Heart left ventricle (tissue), 16 donors: ENCODE measurements at regions of chrX and their contacts with region 1.

Region 1: DNA sequence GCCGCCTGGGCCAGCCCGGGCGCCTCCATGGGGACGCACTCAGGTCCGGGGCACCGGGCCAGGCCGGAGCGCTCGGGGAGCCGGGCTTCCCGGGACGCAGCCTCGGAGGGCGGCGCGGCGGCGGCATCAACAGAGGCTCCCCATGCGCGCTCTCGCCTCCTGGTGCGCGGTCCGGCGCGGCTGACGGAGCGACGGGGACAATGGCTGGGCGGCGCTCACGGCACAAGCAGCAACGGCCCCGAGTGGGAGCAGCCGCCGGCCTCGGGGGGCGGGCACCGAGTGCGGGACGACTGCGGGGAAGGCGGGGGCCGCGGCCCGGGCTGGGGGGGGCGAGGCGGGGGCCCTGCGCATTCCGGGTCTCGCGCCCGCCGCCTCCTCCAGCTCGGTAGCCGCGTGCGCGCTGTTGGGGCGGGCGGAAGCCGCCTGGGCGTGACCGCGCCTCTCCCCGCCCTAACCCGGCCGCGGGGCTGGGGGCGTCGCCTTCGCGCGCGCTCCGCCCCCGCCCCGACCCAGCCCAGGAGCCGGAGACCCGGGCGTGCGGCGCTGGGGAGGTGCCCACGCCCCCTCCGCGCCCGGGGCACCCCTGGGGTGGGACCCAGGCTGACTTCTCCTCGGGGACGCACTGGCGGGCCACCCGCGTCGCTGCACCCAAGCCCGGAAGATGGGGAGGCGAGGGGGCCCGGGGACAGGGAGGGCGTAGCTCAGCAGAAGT is at the start of gene PRKX:
- DNase-seq: peak; percentile 46 to 74 (median 67)
- ATAC-seq: peak; percentile 44 to 91 (median 83)
- H3K4me3 ChIP-seq: peak within 1 kb of the TSS; percentile 52 to 89 (median 68)
- H3K27ac ChIP-seq: peak within 1 kb of the TSS; percentile 41 to 85 (median 80)
- H3K4me1 ChIP-seq: peaks cover 0 to 18% (median 0%) of the 10 kb centered on the region in 12 donors
- H3K27me3 ChIP-seq: peaks cover 0 to 25% (median 0%) of the 10 kb centered on the region in 9 donors
- CTCF ChIP-seq: no peak
- POLR2A ChIP-seq: no peak
- total RNA-seq, gene PRKX: 2.8 to 19.1 (median 4.2) TPM

Region 2: DNA sequence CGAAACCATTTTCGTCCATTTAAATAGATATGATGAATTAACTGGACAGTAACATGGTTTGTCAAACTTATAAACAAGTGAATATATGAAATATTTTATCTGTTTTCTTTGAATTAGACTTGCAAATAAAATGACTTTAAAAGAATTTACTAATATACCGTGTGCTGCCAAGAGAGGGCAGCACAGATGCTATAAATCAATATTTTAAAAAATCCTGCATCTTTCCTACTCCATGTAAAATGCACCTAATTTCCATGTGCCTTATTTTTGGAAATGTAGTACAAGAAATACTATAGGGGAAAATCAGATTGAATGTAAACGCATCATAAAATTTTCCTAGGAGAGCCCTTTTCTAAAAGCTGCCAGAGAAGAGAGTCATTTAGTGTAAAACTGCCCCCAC is 62.1 kb before region 1 on chrX:
- intact Hi-C with region 1: loop called in 3 of 10 experiments (anchors 5 to 10 kb)
- DNase-seq: no peak
- ATAC-seq: no peak
- H3K4me3 ChIP-seq: no peak overlapping the region
- H3K27ac ChIP-seq: no peak overlapping the region
- H3K4me1 ChIP-seq: no peaks in the 10 kb centered on the region
- H3K27me3 ChIP-seq: no peaks in the 10 kb centered on the region
- CTCF ChIP-seq: peak; percentile 25 to 60 (median 46)
- POLR2A ChIP-seq: no peak

Region 3: GRCh38 chrX:3659761-3660160 is 53.6 kb before region 1 on chrX:
- intact Hi-C with region 1: loop called in 3 of 10 experiments (anchors 5 to 10 kb)
- DNase-seq: no peak
- ATAC-seq: no peak
- H3K4me3 ChIP-seq: no peak overlapping the region
- H3K27ac ChIP-seq: no peak overlapping the region
- H3K4me1 ChIP-seq: no peaks in the 10 kb centered on the region
- H3K27me3 ChIP-seq: no peaks in the 10 kb centered on the region
- CTCF ChIP-seq: no peak
- POLR2A ChIP-seq: no peak

Region 4: GRCh38 chrX:3697701-3698279 is 15.6 kb before region 1 on chrX:
- intact Hi-C with region 1: loop called in 1 of 10 experiments (anchors 2 kb)
- DNase-seq: peak; percentile 20 to 68 (median 43)
- ATAC-seq: peak; percentile 82 to 89 (median 85)
- H3K4me3 ChIP-seq: peak overlapping the region in 1 of 12 donors; percentile 12
- H3K27ac ChIP-seq: peak overlapping the region; percentile 18 to 62 (median 49)
- H3K4me1 ChIP-seq: peaks cover 0 to 59% (median 2%) of the 10 kb centered on the region in 12 donors
- H3K27me3 ChIP-seq: no peaks in the 10 kb centered on the region
- CTCF ChIP-seq: no peak
- POLR2A ChIP-seq: no peak

Region 5: GRCh38 chrX:3811331-3812311 is 98.2 kb after region 1 on chrX:
- intact Hi-C with region 1: loop called in 1 of 10 experiments (anchors 5 kb)
- DNase-seq: peak in 2 of 5 donors; percentile 14 to 21
- ATAC-seq: no peak
- H3K4me3 ChIP-seq: no peak overlapping the region
- H3K27ac ChIP-seq: no peak overlapping the region
- H3K4me1 ChIP-seq: peaks cover 0 to 15% (median under 1%) of the 10 kb centered on the region in 12 donors
- H3K27me3 ChIP-seq: peaks cover 0 to 14% (median 0%) of the 10 kb centered on the region in 9 donors
- CTCF ChIP-seq: peak in 11 of 12 donors; percentile 32 to 62 (median 49)
- POLR2A ChIP-seq: no peak